ENCODE measurements at regions of chr13 and their contacts with region 1.

Region 1: GRCh38 chr13:41916173-41916954 is 44.5 kb downstream of the VWA8 start:
- DNase-seq: no peak
- H3K4me3 Mint-ChIP-seq: peak overlapping the region; percentile 54
- H3K27ac Mint-ChIP-seq: peak overlapping the region; percentile 84
- H3K4me1 Mint-ChIP-seq: peaks cover 29% of the 10 kb centered on the region
- H3K27me3 Mint-ChIP-seq: no peaks in the 10 kb centered on the region

Region 2: GRCh38 chr13:41928323-41928722 is 12.0 kb after region 1 on chr13:
- CTCF ChIA-PET with region 1: no interaction called
- POLR2A ChIA-PET with region 1: interaction called, 3 read pairs
- intact Hi-C with region 1: loop called (anchors 1 kb)
- DNase-seq: no peak
- H3K4me3 Mint-ChIP-seq: peak overlapping the region; percentile 34
- H3K27ac Mint-ChIP-seq: peak overlapping the region; percentile 59
- H3K4me1 Mint-ChIP-seq: peaks cover 47% of the 10 kb centered on the region
- H3K27me3 Mint-ChIP-seq: no peaks in the 10 kb centered on the region

Region 3: DNA sequence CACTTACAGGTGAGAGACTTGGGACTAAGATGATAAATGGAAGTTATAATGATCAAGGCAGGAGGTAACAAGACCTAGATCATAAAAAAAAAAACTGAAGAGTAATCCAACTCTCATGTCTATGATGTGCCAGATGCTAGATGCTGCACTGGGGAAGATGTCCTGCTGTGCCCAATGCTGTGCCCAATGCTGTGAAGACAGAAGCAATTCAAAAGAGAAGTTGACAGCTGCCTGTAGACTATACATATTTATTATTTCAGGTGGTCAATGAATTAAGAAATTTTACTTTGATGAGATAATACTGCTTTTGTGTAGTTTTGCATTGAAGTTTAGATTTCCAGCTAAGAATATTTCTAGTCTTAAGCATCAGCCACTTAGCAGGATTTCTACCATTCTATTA is 23.0 kb after region 1 on chr13:
- CTCF ChIA-PET with region 1: no interaction called
- POLR2A ChIA-PET with region 1: no interaction called
- intact Hi-C with region 1: no loop called
- DNase-seq: no peak
- H3K4me3 Mint-ChIP-seq: no peak overlapping the region
- H3K27ac Mint-ChIP-seq: no peak overlapping the region
- H3K4me1 Mint-ChIP-seq: peaks cover 4% of the 10 kb centered on the region
- H3K27me3 Mint-ChIP-seq: no peaks in the 10 kb centered on the region

Region 4: DNA sequence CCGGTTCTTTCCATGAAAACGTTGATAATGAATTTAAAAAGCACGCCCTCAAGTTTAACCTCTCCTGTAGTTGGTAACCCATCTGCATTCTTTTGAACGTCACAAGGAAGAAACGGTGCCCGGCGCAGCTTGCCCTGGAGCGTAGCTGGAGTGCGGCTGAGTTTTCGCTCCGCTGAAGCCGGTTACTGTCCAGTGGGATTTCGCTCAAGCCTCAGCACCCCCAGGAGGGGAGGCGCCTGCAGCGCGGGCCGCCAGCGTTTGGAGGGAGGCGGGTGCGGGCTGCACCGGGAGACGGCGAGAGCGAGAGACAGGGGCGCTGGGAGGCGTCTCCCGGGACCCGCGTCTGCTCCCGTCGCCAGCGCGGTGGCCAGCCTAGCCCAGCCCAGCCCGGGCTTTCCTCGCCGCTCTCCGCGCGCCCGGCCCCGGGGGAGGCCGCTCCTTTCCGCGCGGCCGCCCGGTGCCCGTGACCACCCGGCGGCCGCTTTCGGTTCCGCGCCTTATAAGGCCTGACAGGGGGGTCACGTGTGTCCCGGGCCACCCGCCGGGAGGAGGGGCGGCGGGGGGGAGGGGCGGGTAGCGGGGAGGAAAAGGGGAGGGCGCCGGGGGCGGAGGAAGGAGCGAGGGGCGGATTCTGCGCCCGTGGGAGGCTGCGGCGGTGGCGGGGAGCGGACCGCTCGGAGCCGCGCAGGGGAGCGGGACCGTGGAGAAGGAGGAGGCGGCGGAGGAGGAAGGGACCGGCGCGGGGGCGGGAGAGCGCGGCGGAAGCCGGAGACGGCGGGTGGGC is 123.8 kb after region 1 on chr13:
- CTCF ChIA-PET with region 1: interaction called, 3 read pairs
- POLR2A ChIA-PET with region 1: interaction called, 5 read pairs
- intact Hi-C with region 1: loop called (anchors 2 kb)
- DNase-seq: peak; percentile 91
- H3K4me3 Mint-ChIP-seq: peak overlapping the region; percentile 81
- H3K27ac Mint-ChIP-seq: peak overlapping the region; percentile 68
- H3K4me1 Mint-ChIP-seq: peaks cover 18% of the 10 kb centered on the region
- H3K27me3 Mint-ChIP-seq: peaks cover 5% of the 10 kb centered on the region

Region 5: GRCh38 chr13:42048682-42049453 is 132.5 kb after region 1 on chr13:
- CTCF ChIA-PET with region 1: no interaction called
- POLR2A ChIA-PET with region 1: no interaction called
- intact Hi-C with region 1: loop called (anchors 2 kb)
- DNase-seq: peak; percentile 75
- H3K4me3 Mint-ChIP-seq: peak overlapping the region; percentile 83
- H3K27ac Mint-ChIP-seq: peak overlapping the region; percentile 67
- H3K4me1 Mint-ChIP-seq: peaks cover 12% of the 10 kb centered on the region
- H3K27me3 Mint-ChIP-seq: no peaks in the 10 kb centered on the region

Measured in activated CD4-positive, alpha-beta memory T cell treated with anti-CD3 and anti-CD28 coated beads for 36 hours (primary cell).